SK-N-SH (cell line): ENCODE measurements at regions of chr10 and their contacts with region 1.

Region 1: GRCh38 chr10:101095542-101096213 is 33.9 kb downstream of the KAZALD1 start:
- DNase-seq: peak; percentile 85
- H3K4me3 ChIP-seq: peak overlapping the region in 1 of 2 experiments; percentile 40; a peak in 1 of 4 replicates
- H3K27ac ChIP-seq: no peak overlapping the region
- H3K4me1 ChIP-seq: peaks cover 0 to 10% of the 10 kb centered on the region in 2 experiments; a peak in 1 of 4 replicates
- H3K27me3 ChIP-seq: peaks cover 34% of the 10 kb centered on the region; the same call in 1 of the 2 replicates
- CTCF ChIP-seq: peak; percentile 81
- EP300 ChIP-seq: no peak
- RAD21 ChIP-seq: peak; percentile 72

Region 2: GRCh38 chr10:100894589-100895294 is 200.9 kb before region 1 on chr10:
- CTCF ChIA-PET with region 1: no interaction called
- POLR2A ChIA-PET with region 1: no interaction called
- DNase-seq: no peak
- H3K4me3 ChIP-seq: no peak overlapping the region
- H3K27ac ChIP-seq: no peak overlapping the region
- H3K4me1 ChIP-seq: peaks cover 0 to 11% of the 10 kb centered on the region in 2 experiments; a peak in 3 of 4 replicates
- H3K27me3 ChIP-seq: no peaks in the 10 kb centered on the region
- CTCF ChIP-seq: no peak
- EP300 ChIP-seq: no peak
- RAD21 ChIP-seq: no peak

Region 3: GRCh38 chr10:101060036-101060950 is 35.4 kb before region 1 on chr10:
- CTCF ChIA-PET with region 1: interaction called, 64 read pairs
- POLR2A ChIA-PET with region 1: no interaction called
- DNase-seq: peak; percentile 73
- H3K4me3 ChIP-seq: peak overlapping the region; percentile 83 to 100
- H3K27ac ChIP-seq: peak overlapping the region; percentile 97 to 98
- H3K4me1 ChIP-seq: peaks cover 19 to 23% of the 10 kb centered on the region in 2 experiments; a peak in 3 of 4 replicates
- H3K27me3 ChIP-seq: no peaks in the 10 kb centered on the region
- CTCF ChIP-seq: peak; percentile 96
- EP300 ChIP-seq: no peak
- RAD21 ChIP-seq: peak; percentile 85

Region 4: GRCh38 chr10:101075775-101076174 is 19.9 kb before region 1 on chr10:
- CTCF ChIA-PET with region 1: interaction called, 116 read pairs
- POLR2A ChIA-PET with region 1: no interaction called
- DNase-seq: no peak
- H3K4me3 ChIP-seq: no peak overlapping the region
- H3K27ac ChIP-seq: no peak overlapping the region
- H3K4me1 ChIP-seq: peaks cover 0 to 12% of the 10 kb centered on the region in 2 experiments; a peak in 1 of 4 replicates
- H3K27me3 ChIP-seq: peaks cover 34% of the 10 kb centered on the region; the same call in 1 of the 2 replicates
- CTCF ChIP-seq: no peak
- EP300 ChIP-seq: no peak
- RAD21 ChIP-seq: no peak

Region 5: GRCh38 chr10:101110856-101111546 is 15.3 kb after region 1 on chr10:
- CTCF ChIA-PET with region 1: interaction called, 53 read pairs
- POLR2A ChIA-PET with region 1: interaction called, 3 read pairs
- DNase-seq: no peak
- H3K4me3 ChIP-seq: no peak overlapping the region
- H3K27ac ChIP-seq: no peak overlapping the region
- H3K4me1 ChIP-seq: peaks cover 0 to 12% of the 10 kb centered on the region in 2 experiments; a peak in 1 of 4 replicates
- H3K27me3 ChIP-seq: peaks cover 34% of the 10 kb centered on the region
- CTCF ChIP-seq: no peak
- EP300 ChIP-seq: no peak
- RAD21 ChIP-seq: no peak

Region 6: DNA sequence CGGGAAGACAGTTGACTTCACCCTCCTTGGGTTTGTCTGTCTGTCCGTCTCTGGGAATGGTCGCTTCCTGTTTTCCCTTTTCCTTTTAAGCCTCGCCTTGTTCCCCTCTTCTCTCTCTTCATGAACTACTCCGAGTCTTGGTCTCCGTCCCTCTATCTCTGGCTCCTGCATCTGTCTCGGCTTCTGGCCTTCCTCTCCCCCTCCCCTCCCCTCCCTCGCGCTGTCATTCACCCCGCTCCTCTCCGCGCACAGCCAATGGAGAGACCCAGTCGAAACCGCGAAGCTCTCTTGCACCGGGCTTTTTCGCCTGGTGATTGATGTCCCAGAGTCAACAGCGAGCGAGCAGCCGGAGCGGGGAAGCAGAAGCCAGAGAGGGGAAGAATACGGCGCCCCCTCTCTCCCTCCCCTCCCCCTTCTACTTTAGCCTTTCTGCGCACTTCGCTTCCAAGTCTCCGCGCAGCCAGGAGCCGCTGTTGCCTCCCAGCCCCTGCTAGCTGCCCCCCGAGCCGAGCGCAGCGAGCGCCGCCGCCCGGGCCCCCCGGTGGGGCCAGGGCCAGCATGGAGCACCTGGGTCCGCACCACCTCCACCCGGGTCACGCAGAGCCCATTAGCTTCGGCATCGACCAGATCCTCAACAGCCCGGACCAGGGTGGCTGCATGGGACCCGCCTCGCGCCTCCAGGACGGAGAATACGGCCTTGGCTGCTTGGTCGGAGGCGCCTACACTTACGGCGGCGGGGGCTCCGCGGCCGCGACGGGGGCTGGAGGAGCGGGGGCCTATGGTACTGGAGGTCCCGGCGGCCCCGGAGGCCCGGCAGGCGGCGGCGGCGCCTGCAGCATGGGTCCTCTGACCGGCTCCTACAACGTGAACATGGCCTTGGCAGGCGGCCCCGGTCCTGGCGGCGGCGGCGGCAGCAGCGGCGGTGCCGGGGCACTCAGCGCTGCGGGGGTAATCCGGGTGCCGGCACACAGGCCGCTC is 35.6 kb after region 1 on chr10 and contains the start of gene TLX1:
- CTCF ChIA-PET with region 1: interaction called, 972 read pairs
- POLR2A ChIA-PET with region 1: interaction called, 4 read pairs
- DNase-seq: peak; percentile 80
- H3K4me3 ChIP-seq: peak within 1 kb of the TSS; percentile 33 to 51; a peak in 3 of 4 replicates
- H3K27ac ChIP-seq: no peak within 1 kb of the TSS
- H3K4me1 ChIP-seq: peaks cover 0 to 2% of the 10 kb centered on the region in 2 experiments; a peak in 1 of 4 replicates
- H3K27me3 ChIP-seq: peaks cover 86% of the 10 kb centered on the region
- CTCF ChIP-seq: no peak
- EP300 ChIP-seq: no peak
- RAD21 ChIP-seq: no peak
- polyA plus RNA-seq, gene TLX1: 0.02 TPM in 1 of 2 replicates, not detected in the other